Activated T-helper 1 cell treated with anti-CD3 and anti-CD28 coated beads, Interleukin-12 subunit alpha, Interleukin-12 subunit beta, Interleukin-2, Interleukin-4 antibody, amounts not matched to agents 30 ng/mL and 10 ng/mL and 1 ng/mL, durations not matched to agents 14 hours and 24 hours and 36 hours (primary cell): ENCODE measurements at regions of chr2 and their contacts with region 1.

Region 1: GRCh38 chr2:73736855-73737779 is at the start of gene TPRKB:
- DNase-seq: peak; percentile 94
- H3K4me3 Mint-ChIP-seq: peak within 1 kb of the TSS; percentile 97
- H3K27ac Mint-ChIP-seq: peak within 1 kb of the TSS; percentile 88
- H3K4me1 Mint-ChIP-seq: peaks cover 18% of the 10 kb centered on the region
- H3K27me3 Mint-ChIP-seq: peaks cover 3% of the 10 kb centered on the region
- total RNA-seq, gene TPRKB: 41.5 and 42.7 TPM in 2 replicates

Region 2: GRCh38 chr2:73293534-73294171 is 443.5 kb before region 1 on chr2 and contains the start of gene EGR4:
- intact Hi-C with region 1: loop called (anchors 1 kb)
- DNase-seq: peak; percentile 91
- H3K4me3 Mint-ChIP-seq: peak within 1 kb of the TSS; percentile 75
- H3K27ac Mint-ChIP-seq: peak within 1 kb of the TSS; percentile 63
- H3K4me1 Mint-ChIP-seq: peaks cover 14% of the 10 kb centered on the region
- H3K27me3 Mint-ChIP-seq: peaks cover 72% of the 10 kb centered on the region
- total RNA-seq, gene EGR4: 1.9 TPM in 2 replicates

Region 3: DNA sequence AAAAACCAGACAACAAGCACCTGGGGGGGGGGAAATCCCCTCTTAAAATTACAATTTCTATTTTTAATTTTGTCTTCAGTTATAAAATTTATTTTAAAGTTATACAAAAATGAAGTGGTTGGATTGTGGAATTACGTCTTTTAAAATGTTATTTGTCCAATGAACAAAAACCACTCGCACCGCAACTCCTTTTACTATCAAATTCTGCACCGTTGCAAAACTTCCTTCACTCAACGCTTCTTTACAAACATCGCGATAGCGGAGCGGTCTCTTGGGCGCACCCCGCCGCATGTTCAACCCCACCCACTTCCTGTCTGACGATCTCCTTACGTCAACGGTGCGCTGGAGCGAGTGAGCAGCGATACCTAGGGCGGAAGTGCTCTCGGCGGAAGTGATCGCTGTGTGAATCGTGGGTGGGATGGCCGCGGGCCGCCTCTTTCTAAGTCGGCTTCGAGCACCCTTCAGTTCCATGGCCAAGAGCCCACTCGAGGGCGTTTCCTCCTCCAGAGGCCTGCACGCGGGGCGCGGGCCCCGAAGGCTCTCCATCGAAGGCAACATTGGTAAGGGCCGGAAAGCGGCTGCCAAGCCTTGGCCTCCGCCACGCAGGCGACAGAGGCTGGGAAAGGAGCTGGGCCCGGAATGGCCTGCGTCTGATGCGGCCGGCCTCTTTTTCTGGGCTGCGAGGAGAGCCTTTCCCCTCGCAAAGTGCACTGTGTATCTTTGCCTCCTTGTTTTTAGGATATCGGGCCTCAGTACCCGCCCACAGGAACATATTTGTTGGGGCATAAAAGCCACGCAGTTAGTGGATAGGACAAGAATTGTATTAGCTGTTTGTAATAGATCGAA is 189.6 kb after region 1 on chr2 and contains the start of gene DGUOK:
- intact Hi-C with region 1: loop called (anchors 1 kb)
- DNase-seq: peak; percentile 97
- H3K4me3 Mint-ChIP-seq: peak within 1 kb of the TSS; percentile 91
- H3K27ac Mint-ChIP-seq: peak within 1 kb of the TSS; percentile 88
- H3K4me1 Mint-ChIP-seq: peaks cover 56% of the 10 kb centered on the region
- H3K27me3 Mint-ChIP-seq: no peaks in the 10 kb centered on the region
- total RNA-seq, gene DGUOK: 92.8 and 98.0 TPM in 2 replicates

Region 4: GRCh38 chr2:74198461-74199274 is 461.6 kb after region 1 on chr2 and contains the start of gene MTHFD2:
- intact Hi-C with region 1: loop called (anchors 2 kb)
- DNase-seq: peak; percentile 91
- H3K4me3 Mint-ChIP-seq: peak within 1 kb of the TSS; percentile 98
- H3K27ac Mint-ChIP-seq: peak within 1 kb of the TSS; percentile 100
- H3K4me1 Mint-ChIP-seq: peaks cover 59% of the 10 kb centered on the region
- H3K27me3 Mint-ChIP-seq: no peaks in the 10 kb centered on the region
- total RNA-seq, gene MTHFD2: 437 and 457 TPM in 2 replicates

Region 5: GRCh38 chr2:74507145-74507925 is 770.2 kb after region 1 on chr2 and contains the start of gene PCGF1:
- intact Hi-C with region 1: loop called (anchors 2 kb)
- DNase-seq: peak; percentile 96
- H3K4me3 Mint-ChIP-seq: peak within 1 kb of the TSS; percentile 96
- H3K27ac Mint-ChIP-seq: peak within 1 kb of the TSS; percentile 99
- H3K4me1 Mint-ChIP-seq: peaks cover 55% of the 10 kb centered on the region
- H3K27me3 Mint-ChIP-seq: peaks cover 24% of the 10 kb centered on the region
- total RNA-seq, gene PCGF1: 41.9 and 45.0 TPM in 2 replicates

Region 6: DNA sequence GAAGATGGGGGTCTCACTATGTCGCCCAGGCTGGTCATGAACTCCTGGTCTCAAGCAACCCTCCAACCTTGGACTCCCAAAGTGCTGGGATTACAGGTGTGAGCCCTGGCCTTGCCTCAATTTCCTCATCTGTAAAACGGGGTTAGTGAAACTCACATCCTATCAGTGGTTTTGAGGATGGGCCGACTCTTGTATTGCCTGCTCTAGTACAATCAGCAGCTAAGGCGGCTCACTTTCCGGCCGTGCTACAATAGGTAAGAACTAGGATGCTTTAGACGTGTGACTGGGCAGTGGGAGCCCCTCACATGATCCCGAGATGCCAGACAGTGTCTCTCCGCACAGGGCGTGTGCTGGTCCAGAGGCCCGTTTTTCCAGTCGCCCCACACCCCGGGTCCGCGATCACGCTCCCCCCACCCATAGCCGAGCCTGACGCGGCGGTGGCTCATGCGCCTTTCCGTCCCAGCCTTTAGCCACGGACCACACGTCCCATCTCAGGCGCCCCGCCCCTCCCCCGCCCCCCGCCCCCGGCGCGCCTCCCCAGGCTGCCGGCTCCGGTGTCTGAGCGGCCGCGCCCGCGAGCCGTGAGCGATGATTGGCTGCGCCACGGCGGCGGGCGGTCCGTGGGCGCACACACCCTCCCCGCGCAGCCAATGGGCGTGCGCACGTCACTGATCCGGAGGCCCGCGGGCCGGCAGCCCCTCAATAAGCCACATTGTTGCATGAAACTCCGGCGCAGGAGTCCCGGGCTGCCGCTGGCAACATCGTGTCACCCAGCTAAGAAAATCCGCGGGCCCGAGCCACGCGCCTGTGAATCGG is 1096.5 kb after region 1 on chr2 and contains the start of gene HK2:
- intact Hi-C with region 1: loop called (anchors 2 kb)
- DNase-seq: peak; percentile 85
- H3K4me3 Mint-ChIP-seq: peak within 1 kb of the TSS; percentile 96
- H3K27ac Mint-ChIP-seq: peak within 1 kb of the TSS; percentile 96
- H3K4me1 Mint-ChIP-seq: peaks cover 58% of the 10 kb centered on the region
- H3K27me3 Mint-ChIP-seq: peaks cover 3% of the 10 kb centered on the region
- total RNA-seq, gene HK2: 92.2 and 94.5 TPM in 2 replicates